IMR-90 (cell line): ENCODE measurements at regions of chr10 and their contacts with region 1.

Region 1: DNA sequence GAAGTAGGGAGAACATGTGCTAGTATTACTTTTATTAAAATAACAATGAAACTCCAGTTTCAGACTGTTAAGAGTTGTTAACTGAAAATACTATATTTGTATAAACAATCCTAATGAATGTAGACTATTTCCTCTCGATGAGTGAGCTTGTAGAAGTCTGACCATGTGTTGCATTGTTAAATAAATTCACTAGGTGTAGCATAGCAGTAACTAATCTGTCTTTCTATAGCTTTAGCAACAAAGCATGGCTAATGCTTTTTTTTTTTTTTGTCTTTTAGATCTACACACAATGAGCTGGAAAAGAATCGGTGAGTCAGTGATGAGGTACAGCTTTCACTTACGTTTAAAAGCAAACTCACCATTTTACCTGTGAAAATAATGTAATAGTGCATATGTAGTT is 37.1 kb downstream of the MXI1 start:
- DNase-seq: no peak
- ATAC-seq: peak; percentile 14; the same call in 1 of the 2 replicates
- H3K4me3 ChIP-seq: no peak overlapping the region
- H3K27ac ChIP-seq: no peak overlapping the region
- H3K4me1 ChIP-seq: no peaks in the 10 kb centered on the region
- H3K27me3 ChIP-seq: no peaks in the 10 kb centered on the region
- CTCF ChIP-seq: no peak
- POLR2A ChIP-seq: no peak
- RAD21 ChIP-seq: no peak

Region 2: GRCh38 chr10:110176141-110177030 is 68.2 kb before region 1 on chr10:
- CTCF ChIA-PET with region 1: no interaction called
- POLR2A ChIA-PET with region 1: interaction called, 11 read pairs
- dilution Hi-C with region 1: no loop called
- in situ Hi-C with region 1: no loop called
- intact Hi-C with region 1: no loop called
- DNase-seq: no peak
- ATAC-seq: 0 out of 2 replicates have a peak, but pooled peaks have one; percentile 24
- H3K4me3 ChIP-seq: no peak overlapping the region
- H3K27ac ChIP-seq: no peak overlapping the region
- H3K4me1 ChIP-seq: no peaks in the 10 kb centered on the region
- H3K27me3 ChIP-seq: peaks cover 16% of the 10 kb centered on the region
- CTCF ChIP-seq: no peak
- POLR2A ChIP-seq: no peak
- RAD21 ChIP-seq: no peak

Region 3: GRCh38 chr10:110225756-110226542 is 18.6 kb before region 1 on chr10:
- CTCF ChIA-PET with region 1: no interaction called
- POLR2A ChIA-PET with region 1: no interaction called
- dilution Hi-C with region 1: no loop called
- in situ Hi-C with region 1: no loop called
- intact Hi-C with region 1: no loop called
- DNase-seq: peak; percentile 93
- ATAC-seq: peak; percentile 81
- H3K4me3 ChIP-seq: peak overlapping the region; percentile 90
- H3K27ac ChIP-seq: peak overlapping the region; percentile 96
- H3K4me1 ChIP-seq: peaks cover 6% of the 10 kb centered on the region
- H3K27me3 ChIP-seq: no peaks in the 10 kb centered on the region
- CTCF ChIP-seq: peak; percentile 72
- POLR2A ChIP-seq: no peak
- RAD21 ChIP-seq: peak; percentile 64